Astrocyte of the cerebellum (primary cell): ENCODE measurements at regions of chr22 and their contacts with region 1.

Region 1: GRCh38 chr22:37862570-37863325 is 13.5 kb downstream of the EIF3L start:
- DNase-seq: no peak
- H3K4me3 ChIP-seq: no peak overlapping the region
- CTCF ChIP-seq: no peak

Region 2: GRCh38 chr22:37817705-37818408 is 44.9 kb before region 1 on chr22:
- in situ Hi-C with region 1: loop called (anchors 5 kb)
- DNase-seq: peak; percentile 36
- H3K4me3 ChIP-seq: peak overlapping the region; percentile 14
- CTCF ChIP-seq: peak; percentile 94